ENCODE measurements at regions of chr6 and their contacts with region 1.

Region 1: DNA sequence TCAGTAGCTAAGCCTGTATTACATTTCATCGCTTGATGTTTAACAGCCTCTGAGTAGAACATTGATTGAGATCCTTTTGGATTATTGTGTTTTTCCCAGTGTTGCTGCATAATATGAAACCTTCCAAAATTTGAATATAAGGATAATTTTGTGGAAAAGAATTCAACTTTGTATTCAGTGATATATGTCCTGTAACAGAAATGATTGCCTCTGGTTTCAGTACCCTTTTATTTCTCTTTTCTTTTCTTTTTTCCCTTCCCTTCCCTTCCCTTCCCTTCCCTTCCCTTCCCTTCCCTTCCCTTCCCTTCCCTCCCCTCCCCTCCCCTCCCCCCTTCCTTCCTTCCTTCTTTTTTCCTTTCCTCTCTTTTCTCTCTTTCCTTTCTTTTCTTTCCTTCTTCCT is 74.6 kb downstream of the UTRN start:
- DNase-seq: no peak
- ATAC-seq: no peak
- H3K4me3 ChIP-seq: no peak overlapping the region
- H3K4me3 Mint-ChIP-seq: no peak overlapping the region
- H3K27ac ChIP-seq: no peak overlapping the region
- H3K27ac Mint-ChIP-seq: no peak overlapping the region
- H3K4me1 ChIP-seq: peaks cover 13 to 20% of the 10 kb centered on the region in 2 donors
- H3K4me1 Mint-ChIP-seq: peaks cover 60% of the 10 kb centered on the region
- H3K27me3 ChIP-seq: no peaks in the 10 kb centered on the region
- H3K27me3 Mint-ChIP-seq: no peaks in the 10 kb centered on the region
- CTCF ChIP-seq: no peak

Region 2: DNA sequence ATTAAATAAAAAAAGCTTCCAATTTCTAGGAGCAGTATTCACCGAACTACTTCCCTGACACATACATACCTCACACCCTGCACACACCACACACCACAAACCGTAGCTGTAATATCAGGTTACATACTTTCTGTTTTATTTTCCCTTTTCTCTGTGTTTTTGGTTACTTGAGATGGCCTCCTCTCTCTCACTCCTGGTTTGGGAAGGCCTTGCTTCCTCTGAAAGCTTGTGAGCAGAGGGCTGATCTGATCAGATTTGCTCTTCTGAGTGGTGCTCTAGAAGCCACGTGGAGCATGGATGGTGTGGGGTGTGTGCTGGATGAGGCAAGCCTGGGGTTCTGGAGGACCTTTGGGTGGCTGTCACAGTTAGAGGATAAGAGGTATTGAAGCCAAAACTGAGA is 53.8 kb before region 1 on chr6:
- CTCF ChIA-PET with region 1: no interaction called
- POLR2A ChIA-PET with region 1: interaction called, 10 read pairs
- intact Hi-C with region 1: no loop called
- DNase-seq: no peak
- ATAC-seq: no peak
- H3K4me3 ChIP-seq: no peak overlapping the region
- H3K4me3 Mint-ChIP-seq: no peak overlapping the region
- H3K27ac ChIP-seq: no peak overlapping the region
- H3K27ac Mint-ChIP-seq: no peak overlapping the region
- H3K4me1 ChIP-seq: peaks cover 7 to 10% of the 10 kb centered on the region in 2 donors
- H3K4me1 Mint-ChIP-seq: peaks cover 8% of the 10 kb centered on the region
- H3K27me3 ChIP-seq: peaks cover 0 to 3% (median 0%) of the 10 kb centered on the region in 4 experiments
- H3K27me3 Mint-ChIP-seq: peaks cover 19% of the 10 kb centered on the region
- CTCF ChIP-seq: no peak

Region 3: GRCh38 chr6:145445674-145446073 is 1085.9 kb after region 1 on chr6:
- CTCF ChIA-PET with region 1: no interaction called
- POLR2A ChIA-PET with region 1: no interaction called
- intact Hi-C with region 1: no loop called
- DNase-seq: no peak
- ATAC-seq: no peak
- H3K4me3 ChIP-seq: no peak overlapping the region
- H3K4me3 Mint-ChIP-seq: no peak overlapping the region
- H3K27ac ChIP-seq: no peak overlapping the region
- H3K27ac Mint-ChIP-seq: no peak overlapping the region
- H3K4me1 ChIP-seq: no peaks in the 10 kb centered on the region
- H3K4me1 Mint-ChIP-seq: no peaks in the 10 kb centered on the region
- H3K27me3 ChIP-seq: no peaks in the 10 kb centered on the region
- H3K27me3 Mint-ChIP-seq: no peaks in the 10 kb centered on the region
- CTCF ChIP-seq: no peak

Measured in B cell (primary cell).